ENCODE measurements at regions of chr15 and their contacts with region 1.

Region 1: DNA sequence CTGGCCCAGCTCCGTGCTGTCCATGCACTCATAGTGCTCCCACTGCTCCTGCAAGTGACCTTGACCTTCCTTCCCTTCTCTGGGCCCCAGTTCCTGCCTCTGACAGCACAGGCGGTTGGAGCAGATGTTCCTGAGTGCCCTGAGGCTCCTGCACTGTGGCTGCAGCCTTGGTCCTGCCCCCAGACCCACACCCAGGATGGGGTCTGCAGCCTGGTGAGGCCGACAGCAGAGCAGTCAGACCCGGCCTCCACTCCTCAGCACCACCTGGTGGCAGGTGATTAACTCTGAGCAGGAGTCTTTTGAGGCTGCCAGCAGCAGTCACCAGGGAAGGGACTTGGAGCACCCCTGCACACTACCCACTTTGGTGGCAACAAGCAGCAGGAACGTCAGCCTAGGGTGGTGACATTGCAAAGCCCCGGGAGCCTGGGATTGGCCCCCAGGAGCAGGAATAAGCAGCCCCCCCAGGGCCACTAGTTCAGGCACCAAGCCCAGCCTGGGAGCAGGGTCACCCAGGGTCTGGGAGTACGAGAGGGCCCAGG is 64.6 kb downstream of the CYP11A1 start:
- DNase-seq: no peak

Region 2: GRCh38 chr15:74144153-74144775 is 158.6 kb before region 1 on chr15:
- intact Hi-C with region 1: loop called (anchors 5 kb)
- DNase-seq: no peak

Measured in cardiac septum (tissue), 1 donor.